ENCODE measurements at regions of chr3 and their contacts with region 1.

Region 1: DNA sequence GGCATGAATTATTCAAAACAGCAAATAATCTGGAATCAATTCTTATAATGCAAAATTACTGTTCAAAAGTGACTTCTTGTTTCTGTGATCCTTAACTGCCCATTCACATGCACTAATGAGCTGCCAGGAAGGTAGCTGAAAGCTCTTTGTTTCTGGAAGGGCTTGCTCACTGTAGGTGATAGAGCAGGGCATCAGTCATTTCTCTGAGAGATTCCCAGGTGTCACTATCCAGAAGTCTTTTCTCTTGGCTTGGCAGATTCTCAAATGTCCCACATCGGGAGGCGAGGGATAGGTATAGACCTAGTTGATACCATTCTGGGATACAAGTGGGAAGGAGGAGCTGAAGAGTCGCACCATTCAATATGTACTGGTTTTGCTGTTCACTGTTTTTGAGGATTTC is 35.0 kb downstream of the C3orf85 start:
- DNase-seq: no peak
- H3K4me3 ChIP-seq: no peak overlapping the region
- H3K27ac ChIP-seq: no peak overlapping the region
- H3K4me1 ChIP-seq: peaks cover 0 to 9% (median 0%) of the 10 kb centered on the region in 4 experiments; a peak in 2 of 7 replicates
- H3K27me3 ChIP-seq: no peaks in the 10 kb centered on the region
- CTCF ChIP-seq: no peak
- EP300 ChIP-seq: no peak
- POLR2A ChIP-seq: no peak
- RAD21 ChIP-seq: no peak

Region 2: GRCh38 chr3:109154979-109155378 is 16.5 kb before region 1 on chr3:
- CTCF ChIA-PET with region 1: interaction called, 11 read pairs
- POLR2A ChIA-PET with region 1: no interaction called
- DNase-seq: no peak
- H3K4me3 ChIP-seq: no peak overlapping the region
- H3K27ac ChIP-seq: no peak overlapping the region
- H3K4me1 ChIP-seq: no peaks in the 10 kb centered on the region
- H3K27me3 ChIP-seq: no peaks in the 10 kb centered on the region
- CTCF ChIP-seq: no peak
- EP300 ChIP-seq: no peak
- POLR2A ChIP-seq: no peak
- RAD21 ChIP-seq: no peak